CD14-positive monocyte (primary cell): ENCODE measurements at regions of chr2 and their contacts with region 1.

Region 1: GRCh38 chr2:96485751-96486651 is 19.2 kb downstream of the NEURL3 start:
- DNase-seq: peak; percentile 92 to 96 (median 92)
- H3K4me3 ChIP-seq: peak overlapping the region; percentile 45 to 87 (median 56)
- H3K4me3 Mint-ChIP-seq: peak overlapping the region; percentile 95 to 100
- H3K27ac ChIP-seq: peak overlapping the region; percentile 89 to 99
- H3K27ac Mint-ChIP-seq: peak overlapping the region; percentile 97 to 100 (median 100)
- H3K4me1 ChIP-seq: peaks cover 23 to 38% of the 10 kb centered on the region in 2 donors
- H3K4me1 Mint-ChIP-seq: peaks cover 44% of the 10 kb centered on the region
- H3K27me3 ChIP-seq: no peaks in the 10 kb centered on the region
- H3K27me3 Mint-ChIP-seq: peaks cover 0 to 2% (median 1%) of the 10 kb centered on the region in 3 donors
- CTCF ChIP-seq: no peak

Region 2: GRCh38 chr2:96325041-96325883 is 160.7 kb before region 1 on chr2 and contains the start of gene ITPRIPL1:
- intact Hi-C with region 1: no loop called
- DNase-seq: no peak
- H3K4me3 ChIP-seq: peak within 1 kb of the TSS; percentile 68 to 86 (median 69)
- H3K4me3 Mint-ChIP-seq: peak within 1 kb of the TSS; percentile 91 to 97
- H3K27ac ChIP-seq: peak within 1 kb of the TSS in 1 of 2 donors; percentile 36
- H3K27ac Mint-ChIP-seq: peak within 1 kb of the TSS in 6 of 7 donors; percentile 5 to 82 (median 24)
- H3K4me1 ChIP-seq: peaks cover 33 to 40% of the 10 kb centered on the region in 2 donors
- H3K4me1 Mint-ChIP-seq: peaks cover 50% of the 10 kb centered on the region
- H3K27me3 ChIP-seq: peaks cover 0 to 5% of the 10 kb centered on the region in 2 donors
- H3K27me3 Mint-ChIP-seq: peaks cover 29 to 33% (median 29%) of the 10 kb centered on the region in 3 donors
- CTCF ChIP-seq: no peak
- polyA plus RNA-seq, gene ITPRIPL1: 0.18 to 0.50 (median 0.39) TPM

Region 3: GRCh38 chr2:96527286-96528005 is 41.4 kb after region 1 on chr2:
- intact Hi-C with region 1: loop called in 1 of 2 experiments (anchors 2 kb)
- DNase-seq: peak in 2 of 3 donors; percentile 29 to 50
- H3K4me3 ChIP-seq: peak overlapping the region; percentile 40 to 78 (median 65)
- H3K4me3 Mint-ChIP-seq: peak overlapping the region; percentile 78 to 88
- H3K27ac ChIP-seq: peak overlapping the region in 1 of 2 donors; percentile 67
- H3K27ac Mint-ChIP-seq: peak overlapping the region; percentile 38 to 86 (median 82)
- H3K4me1 ChIP-seq: peaks cover 40 to 51% of the 10 kb centered on the region in 2 donors
- H3K4me1 Mint-ChIP-seq: peaks cover 47% of the 10 kb centered on the region
- H3K27me3 ChIP-seq: peaks cover 0 to 2% of the 10 kb centered on the region in 2 donors
- H3K27me3 Mint-ChIP-seq: peaks cover 13 to 33% (median 31%) of the 10 kb centered on the region in 3 donors
- CTCF ChIP-seq: peak; percentile 6

Region 4: GRCh38 chr2:96618604-96619283 is 132.7 kb after region 1 on chr2:
- intact Hi-C with region 1: no loop called
- DNase-seq: peak; percentile 35 to 57 (median 43)
- H3K4me3 ChIP-seq: peak overlapping the region in 1 of 3 experiments; percentile 76
- H3K4me3 Mint-ChIP-seq: no peak overlapping the region
- H3K27ac ChIP-seq: peak overlapping the region; percentile 83 to 87
- H3K27ac Mint-ChIP-seq: peak overlapping the region; percentile 81 to 97 (median 90)
- H3K4me1 ChIP-seq: peaks cover 40 to 50% of the 10 kb centered on the region in 2 donors
- H3K4me1 Mint-ChIP-seq: peaks cover 49% of the 10 kb centered on the region
- H3K27me3 ChIP-seq: no peaks in the 10 kb centered on the region
- H3K27me3 Mint-ChIP-seq: peaks cover 0 to 2% (median 0%) of the 10 kb centered on the region in 3 donors
- CTCF ChIP-seq: no peak